ENCODE measurements at regions of chr1 and their contacts with region 1.

Region 1: GRCh38 chr1:172826096-172826743 is 167.3 kb downstream of the FASLG start:
- DNase-seq: peak; percentile 23
- H3K4me3 ChIP-seq: no peak overlapping the region
- H3K27ac ChIP-seq: peak overlapping the region; percentile 13
- H3K4me1 ChIP-seq: no peaks in the 10 kb centered on the region
- H3K27me3 ChIP-seq: no peaks in the 10 kb centered on the region
- CTCF ChIP-seq: peak; percentile 41

Region 2: GRCh38 chr1:172515927-172516326 is 310.3 kb before region 1 on chr1:
- intact Hi-C with region 1: no loop called
- DNase-seq: no peak
- H3K4me3 ChIP-seq: no peak overlapping the region
- H3K27ac ChIP-seq: no peak overlapping the region
- H3K4me1 ChIP-seq: no peaks in the 10 kb centered on the region
- H3K27me3 ChIP-seq: no peaks in the 10 kb centered on the region
- CTCF ChIP-seq: no peak

Region 3: GRCh38 chr1:173202430-173203145 is 376.4 kb after region 1 on chr1:
- intact Hi-C with region 1: loop called (anchors 2 kb)
- DNase-seq: peak; percentile 38
- H3K4me3 ChIP-seq: no peak overlapping the region
- H3K27ac ChIP-seq: no peak overlapping the region
- H3K4me1 ChIP-seq: no peaks in the 10 kb centered on the region
- H3K27me3 ChIP-seq: no peaks in the 10 kb centered on the region
- CTCF ChIP-seq: peak; percentile 38